MCF 10A (cell line): ENCODE measurements at regions of chr1 and their contacts with region 1.

Region 1: GRCh38 chr1:43529206-43529731 is 1.4 kb upstream of the PTPRF start:
- DNase-seq: peak; percentile 93
- H3K4me3 Mint-ChIP-seq: no peak overlapping the region
- H3K27ac Mint-ChIP-seq: no peak overlapping the region
- H3K4me1 Mint-ChIP-seq: peaks cover 48% of the 10 kb centered on the region
- H3K27me3 Mint-ChIP-seq: no peaks in the 10 kb centered on the region
- CTCF ChIP-seq: peak; percentile 84

Region 2: GRCh38 chr1:43171876-43172526 is 357.3 kb before region 1 on chr1 and contains the starts of genes CFAP57 and EBNA1BP2:
- CTCF ChIA-PET with region 1: no interaction called
- POLR2A ChIA-PET with region 1: no interaction called
- intact Hi-C with region 1: no loop called
- DNase-seq: peak; percentile 93
- H3K4me3 Mint-ChIP-seq: peak within 1 kb of the TSS; percentile 94
- H3K27ac Mint-ChIP-seq: peak within 1 kb of the TSS; percentile 96
- H3K4me1 Mint-ChIP-seq: no peaks in the 10 kb centered on the region
- H3K27me3 Mint-ChIP-seq: no peaks in the 10 kb centered on the region
- CTCF ChIP-seq: no peak
- total RNA-seq, gene CFAP57: 0.17 and 0.44 TPM in 2 replicates
- total RNA-seq, gene EBNA1BP2: 159 and 171 TPM in 2 replicates

Region 3: GRCh38 chr1:43582162-43582589 is 52.9 kb after region 1 on chr1:
- CTCF ChIA-PET with region 1: interaction called, 7 read pairs
- POLR2A ChIA-PET with region 1: interaction called, 9 read pairs
- intact Hi-C with region 1: loop called (anchors 2 kb)
- DNase-seq: peak; percentile 98
- H3K4me3 Mint-ChIP-seq: peak overlapping the region; percentile 24
- H3K27ac Mint-ChIP-seq: peak overlapping the region; percentile 80
- H3K4me1 Mint-ChIP-seq: peaks cover 33% of the 10 kb centered on the region
- H3K27me3 Mint-ChIP-seq: no peaks in the 10 kb centered on the region
- CTCF ChIP-seq: no peak

Region 4: DNA sequence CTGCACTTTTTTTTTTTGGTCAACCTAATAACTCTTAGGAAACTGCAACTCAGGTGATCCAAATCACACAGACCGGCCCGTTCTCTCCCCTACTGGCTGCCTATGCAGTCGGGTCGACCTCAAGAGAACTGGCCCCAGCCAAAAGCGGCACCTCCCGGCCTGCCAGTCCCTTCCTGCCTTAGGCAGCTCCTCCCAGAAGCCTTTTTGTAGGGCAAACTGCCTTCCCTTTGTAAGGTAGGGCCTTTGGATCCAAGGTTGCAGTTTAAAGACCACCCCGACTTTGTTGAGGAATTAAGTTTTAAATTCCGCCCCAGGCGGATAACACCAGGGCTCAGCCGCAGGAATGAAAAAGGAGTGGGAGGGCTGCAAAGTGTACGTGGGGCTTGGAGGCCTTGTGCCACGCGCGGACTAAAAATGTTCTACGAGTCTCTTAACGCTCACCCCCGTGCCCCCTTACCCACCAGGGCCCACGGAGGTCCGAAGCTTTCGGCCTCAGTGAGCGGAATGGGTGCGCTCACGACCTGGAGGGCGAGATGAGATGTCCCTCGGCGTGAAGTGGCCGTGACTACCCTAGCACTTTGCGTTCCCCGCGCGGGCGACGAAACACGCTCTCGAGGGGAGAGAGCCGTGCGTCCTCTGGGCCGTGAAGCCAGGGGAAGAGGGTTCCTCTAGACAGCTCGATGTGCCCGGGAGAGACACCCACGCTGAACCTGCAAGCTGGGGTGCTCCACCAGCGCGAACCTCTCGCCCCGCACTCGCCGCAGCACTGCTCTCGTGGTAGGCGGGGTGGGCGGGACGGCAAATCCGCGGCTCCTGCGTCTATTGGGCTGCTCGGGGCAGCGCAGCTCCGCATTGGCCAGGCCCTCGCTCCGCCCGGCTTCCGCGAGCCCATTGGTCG is 177.6 kb after region 1 on chr1:
- CTCF ChIA-PET with region 1: interaction called, 7 read pairs
- POLR2A ChIA-PET with region 1: interaction called, 11 read pairs
- intact Hi-C with region 1: loop called (anchors 1 kb)
- DNase-seq: peak; percentile 87
- H3K4me3 Mint-ChIP-seq: peak overlapping the region; percentile 82
- H3K27ac Mint-ChIP-seq: peak overlapping the region; percentile 54
- H3K4me1 Mint-ChIP-seq: peaks cover 26% of the 10 kb centered on the region
- H3K27me3 Mint-ChIP-seq: no peaks in the 10 kb centered on the region
- CTCF ChIP-seq: no peak

Region 5: DNA sequence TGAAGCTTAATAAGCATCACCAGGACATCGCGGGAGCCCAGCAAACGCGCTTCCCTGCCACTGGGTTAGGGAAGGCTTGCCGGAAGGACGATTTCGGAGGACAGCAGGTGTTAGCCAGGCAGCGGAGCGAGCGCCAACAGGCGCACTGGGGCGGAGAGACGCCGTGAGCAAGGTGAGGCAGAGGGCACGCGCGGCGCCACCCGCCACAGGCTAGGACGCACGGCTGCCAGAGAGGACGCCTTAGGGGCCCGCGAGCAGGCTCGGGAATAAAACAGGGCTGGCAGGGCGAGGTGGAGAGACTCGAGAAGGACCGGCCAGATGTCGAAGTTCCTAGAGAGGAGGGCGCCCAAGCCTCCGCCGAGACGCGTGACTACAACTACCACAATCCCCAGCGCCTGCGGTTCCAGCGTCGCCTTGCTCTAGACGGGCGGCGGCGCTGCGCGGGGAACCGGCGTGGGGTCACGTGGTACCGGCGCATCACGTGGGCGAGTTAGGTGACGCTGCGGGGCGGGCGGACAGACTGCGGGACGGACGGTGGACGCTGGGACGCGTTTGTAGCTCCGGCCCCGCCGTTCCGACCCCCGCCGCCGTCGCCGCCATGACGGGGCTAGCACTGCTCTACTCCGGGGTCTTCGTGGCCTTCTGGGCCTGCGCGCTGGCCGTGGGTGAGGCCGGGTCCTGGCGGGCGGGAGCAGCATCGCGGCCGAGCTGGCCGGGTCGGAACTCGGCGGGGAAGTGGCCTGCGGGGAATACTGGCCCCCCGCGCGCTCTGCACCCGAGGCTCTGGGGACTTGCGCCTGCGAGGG is 445.4 kb after region 1 on chr1 and contains the start of gene ATP6V0B:
- CTCF ChIA-PET with region 1: interaction called, 4 read pairs
- POLR2A ChIA-PET with region 1: no interaction called
- intact Hi-C with region 1: loop called (anchors 5 kb)
- DNase-seq: peak; percentile 95
- H3K4me3 Mint-ChIP-seq: peak within 1 kb of the TSS; percentile 94
- H3K27ac Mint-ChIP-seq: peak within 1 kb of the TSS; percentile 94
- H3K4me1 Mint-ChIP-seq: peaks cover 35% of the 10 kb centered on the region
- H3K27me3 Mint-ChIP-seq: no peaks in the 10 kb centered on the region
- CTCF ChIP-seq: no peak
- total RNA-seq, gene ATP6V0B: 120 and 141 TPM in 2 replicates

Region 6: GRCh38 chr1:44036409-44037139 is 507.3 kb after region 1 on chr1:
- CTCF ChIA-PET with region 1: interaction called, 5 read pairs
- POLR2A ChIA-PET with region 1: no interaction called
- intact Hi-C with region 1: loop called (anchors 2 kb)
- DNase-seq: peak; percentile 85
- H3K4me3 Mint-ChIP-seq: no peak overlapping the region
- H3K27ac Mint-ChIP-seq: no peak overlapping the region
- H3K4me1 Mint-ChIP-seq: peaks cover 11% of the 10 kb centered on the region
- H3K27me3 Mint-ChIP-seq: no peaks in the 10 kb centered on the region
- CTCF ChIP-seq: peak; percentile 73